Prostate gland (tissue), 2 donors: ENCODE measurements at regions of chr5 and their contacts with region 1.

Region 1: GRCh38 chr5:147558826-147559225 is 49.0 kb upstream of the DPYSL3 start:
- DNase-seq: peak; percentile 63
- H3K4me3 ChIP-seq: no peak overlapping the region
- H3K27ac ChIP-seq: no peak overlapping the region
- H3K4me1 ChIP-seq: peaks cover 6% of the 10 kb centered on the region
- H3K27me3 ChIP-seq: no peaks in the 10 kb centered on the region
- CTCF ChIP-seq: peak; percentile 39 to 76 (median 70)
- POLR2A ChIP-seq: no peak

Region 2: DNA sequence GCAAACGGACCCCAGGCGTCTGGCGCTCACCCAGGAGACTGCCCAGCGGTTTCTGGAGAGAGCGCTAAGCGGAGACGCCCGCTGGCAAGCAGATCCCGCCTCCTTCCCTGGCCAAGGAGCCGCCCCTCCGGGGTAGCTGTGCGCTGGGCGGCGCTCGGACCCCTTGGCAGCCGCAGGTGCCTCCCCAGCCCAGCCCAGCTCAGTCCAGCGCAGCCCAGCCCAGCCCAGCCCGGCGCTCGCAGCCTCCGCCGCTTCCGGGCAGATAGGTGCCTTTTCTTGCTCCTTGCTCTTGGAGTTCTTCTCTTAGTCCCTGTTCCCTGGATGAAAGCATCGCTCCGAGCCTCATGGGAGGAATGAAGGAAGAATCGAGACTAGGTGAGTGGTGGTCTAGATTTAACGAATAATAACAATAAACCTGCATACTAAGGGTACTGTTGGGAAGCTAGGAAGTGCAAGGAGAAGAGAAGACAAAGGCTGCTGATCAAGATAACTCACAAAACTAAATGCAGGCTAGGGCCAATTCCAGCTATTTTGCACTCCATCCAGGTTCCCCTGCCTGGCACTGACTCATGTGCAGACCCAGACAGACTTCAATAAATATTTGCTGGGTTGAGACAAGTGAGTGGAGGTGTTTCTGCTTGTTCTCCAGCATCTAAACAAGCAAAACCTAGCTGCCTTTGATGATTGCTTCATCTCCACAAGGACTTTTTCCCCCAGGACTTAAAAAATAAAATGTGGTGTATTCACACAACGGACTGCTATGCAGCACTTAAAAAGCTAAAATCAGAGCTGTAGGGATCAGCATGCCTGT is 323.8 kb before region 1 on chr5 and contains the start of gene STK32A:
- intact Hi-C with region 1: loop called (anchors 5 kb)
- DNase-seq: no peak
- H3K4me3 ChIP-seq: peak within 1 kb of the TSS; percentile 35 to 42
- H3K27ac ChIP-seq: peak within 1 kb of the TSS; percentile 53 to 66
- H3K4me1 ChIP-seq: peaks cover 4% of the 10 kb centered on the region
- H3K27me3 ChIP-seq: no peaks in the 10 kb centered on the region
- CTCF ChIP-seq: no peak
- POLR2A ChIP-seq: no peak
- total RNA-seq, gene STK32A: 0.64 to 12.9 TPM

Region 3: GRCh38 chr5:147391781-147392180 is 167.0 kb before region 1 on chr5:
- intact Hi-C with region 1: loop called (anchors 5 kb)
- DNase-seq: no peak
- H3K4me3 ChIP-seq: no peak overlapping the region
- H3K27ac ChIP-seq: no peak overlapping the region
- H3K4me1 ChIP-seq: no peaks in the 10 kb centered on the region
- H3K27me3 ChIP-seq: no peaks in the 10 kb centered on the region
- CTCF ChIP-seq: peak in 3 of 4 experiments; percentile 24 to 37 (median 36)
- POLR2A ChIP-seq: no peak

Region 4: GRCh38 chr5:147437161-147437596 is 121.6 kb before region 1 on chr5:
- intact Hi-C with region 1: no loop called
- DNase-seq: no peak
- H3K4me3 ChIP-seq: no peak overlapping the region
- H3K27ac ChIP-seq: no peak overlapping the region
- H3K4me1 ChIP-seq: no peaks in the 10 kb centered on the region
- H3K27me3 ChIP-seq: no peaks in the 10 kb centered on the region
- CTCF ChIP-seq: no peak
- POLR2A ChIP-seq: no peak

Region 5: DNA sequence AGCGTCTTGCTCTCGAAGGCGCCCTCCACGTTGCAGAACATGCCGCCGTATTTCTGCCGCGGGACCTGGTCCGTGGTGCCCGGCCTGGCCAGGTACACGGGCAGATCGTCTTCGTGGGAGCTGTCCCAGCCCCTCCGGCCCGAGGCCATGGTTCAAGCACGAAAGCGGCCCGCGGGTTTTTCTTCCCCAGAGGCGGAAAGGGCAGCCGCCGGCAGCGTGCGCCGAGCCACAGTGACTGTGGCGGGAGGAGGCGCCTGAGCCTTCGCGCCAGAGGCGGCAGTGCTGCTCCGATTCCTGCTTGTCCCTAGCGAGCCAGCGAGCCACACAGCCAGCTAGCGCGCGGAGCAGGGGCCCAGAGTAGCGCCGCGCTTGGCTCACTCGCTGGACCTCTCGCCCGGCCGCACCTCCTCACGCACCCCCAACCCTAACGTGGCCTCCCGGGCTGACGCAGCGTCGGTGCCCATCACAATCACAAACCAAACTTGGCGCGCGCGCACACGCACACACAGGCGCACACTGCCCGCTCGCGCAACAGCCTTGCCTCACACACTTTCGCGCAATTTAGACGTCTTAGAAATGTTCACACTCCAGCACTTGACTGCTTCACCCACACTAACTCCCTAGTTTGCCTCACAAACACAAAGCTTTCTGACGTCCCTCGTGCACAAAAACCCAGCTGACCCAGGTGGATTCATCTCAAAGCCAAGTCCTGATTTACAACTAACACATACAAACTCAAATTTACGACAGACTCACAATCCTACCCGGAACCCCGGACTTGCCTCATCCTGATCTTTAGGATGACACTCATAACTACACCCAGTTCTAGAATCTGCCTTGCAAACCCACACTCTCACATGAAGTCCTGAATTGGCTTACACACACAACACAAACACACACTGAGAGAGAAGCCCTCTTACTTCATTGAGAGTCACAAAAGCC is 48.8 kb before region 1 on chr5 and contains the start of gene DPYSL3:
- intact Hi-C with region 1: loop called (anchors 5 kb)
- DNase-seq: peak; percentile 79
- H3K4me3 ChIP-seq: peak within 1 kb of the TSS; percentile 65 to 68
- H3K27ac ChIP-seq: peak within 1 kb of the TSS; percentile 78 to 87
- H3K4me1 ChIP-seq: peaks cover 11% of the 10 kb centered on the region
- H3K27me3 ChIP-seq: no peaks in the 10 kb centered on the region
- CTCF ChIP-seq: peak in 2 of 4 experiments; percentile 32 to 54
- POLR2A ChIP-seq: peak; percentile 40
- total RNA-seq, gene DPYSL3: 113 to 126 TPM